Activated T-helper 1 cell treated with anti-CD3 and anti-CD28 coated beads, Interleukin-12 subunit alpha, Interleukin-12 subunit beta, Interleukin-2, Interleukin-4 antibody, amounts not matched to agents 30 ng/mL and 10 ng/mL and 1 ng/mL, durations not matched to agents 14 hours and 24 hours and 36 hours (primary cell): ENCODE measurements at regions of chr13 and their contacts with region 1.

Region 1: DNA sequence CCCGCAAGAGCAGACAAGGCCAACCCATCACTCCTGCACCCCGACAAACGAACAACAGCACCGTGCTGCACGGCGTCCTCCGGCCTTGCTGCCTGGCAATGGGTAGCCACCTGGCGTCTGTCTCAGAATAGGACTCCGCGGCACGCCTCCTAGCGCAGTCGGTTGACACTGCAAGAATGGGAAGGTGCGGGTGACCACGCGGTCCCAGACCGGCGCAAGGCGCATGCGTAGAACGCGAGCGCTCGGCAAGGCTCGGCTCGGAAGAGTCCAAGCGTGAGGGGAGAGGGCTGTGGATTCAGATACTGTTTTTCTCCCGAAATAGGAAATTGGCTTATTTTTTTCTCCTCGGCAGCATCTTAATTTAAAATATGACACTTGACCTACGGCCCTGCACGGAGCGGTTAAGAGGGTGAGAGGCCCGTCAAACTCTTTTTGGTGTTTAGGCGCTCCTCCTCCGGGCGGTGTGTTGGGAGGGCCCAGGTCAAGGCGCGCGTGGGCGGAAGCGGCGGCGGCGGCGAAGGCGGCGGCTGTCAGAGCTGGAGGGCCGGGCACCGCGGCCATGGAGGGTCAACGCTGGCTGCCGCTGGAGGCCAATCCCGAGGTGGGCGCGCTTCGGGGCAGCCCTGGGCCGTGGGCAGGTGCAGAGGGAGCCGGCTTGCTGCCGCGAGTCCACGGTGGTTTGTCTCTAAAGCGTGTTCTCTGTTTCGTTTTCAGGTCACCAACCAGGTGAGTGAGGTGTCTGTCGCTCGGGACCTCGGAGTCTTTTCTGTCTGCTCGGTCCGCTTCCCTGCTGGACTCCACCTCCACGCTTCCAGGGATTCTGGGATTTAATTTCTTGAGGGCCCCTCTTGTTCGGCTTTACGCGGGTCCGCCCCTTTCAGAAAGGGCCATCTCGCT is at the start of gene UCHL3:
- DNase-seq: peak; percentile 95
- H3K4me3 Mint-ChIP-seq: peak within 1 kb of the TSS; percentile 99
- H3K27ac Mint-ChIP-seq: peak within 1 kb of the TSS; percentile 98
- H3K4me1 Mint-ChIP-seq: peaks cover 39% of the 10 kb centered on the region
- H3K27me3 Mint-ChIP-seq: no peaks in the 10 kb centered on the region
- total RNA-seq, gene UCHL3: 38.9 and 46.6 TPM in 2 replicates

Region 2: GRCh38 chr13:75181906-75182305 is 367.6 kb before region 1 on chr13:
- intact Hi-C with region 1: no loop called
- DNase-seq: no peak
- H3K4me3 Mint-ChIP-seq: no peak overlapping the region
- H3K27ac Mint-ChIP-seq: no peak overlapping the region
- H3K4me1 Mint-ChIP-seq: no peaks in the 10 kb centered on the region
- H3K27me3 Mint-ChIP-seq: no peaks in the 10 kb centered on the region

Region 3: DNA sequence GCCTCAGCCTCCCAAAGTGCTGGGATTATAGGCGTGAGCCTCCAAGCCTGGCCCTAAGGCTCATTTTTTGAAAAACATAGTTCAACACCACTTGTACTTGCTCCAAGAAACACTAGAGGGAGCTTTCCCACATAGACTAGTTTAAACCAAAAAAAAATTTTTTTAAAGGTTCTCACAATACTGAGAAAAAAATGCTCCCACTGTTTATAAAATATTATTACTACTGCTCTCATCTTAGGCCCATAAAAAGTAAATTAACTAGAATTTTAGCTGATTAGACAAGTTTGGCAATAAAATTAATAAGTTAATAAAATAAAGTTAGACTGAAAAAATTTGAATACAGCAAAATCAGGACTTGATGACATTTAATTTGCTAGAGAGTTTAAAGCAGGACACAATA is 177.0 kb before region 1 on chr13:
- intact Hi-C with region 1: loop called (anchors 1 kb)
- DNase-seq: no peak
- H3K4me3 Mint-ChIP-seq: no peak overlapping the region
- H3K27ac Mint-ChIP-seq: no peak overlapping the region
- H3K4me1 Mint-ChIP-seq: peaks cover 12% of the 10 kb centered on the region
- H3K27me3 Mint-ChIP-seq: no peaks in the 10 kb centered on the region

Region 4: DNA sequence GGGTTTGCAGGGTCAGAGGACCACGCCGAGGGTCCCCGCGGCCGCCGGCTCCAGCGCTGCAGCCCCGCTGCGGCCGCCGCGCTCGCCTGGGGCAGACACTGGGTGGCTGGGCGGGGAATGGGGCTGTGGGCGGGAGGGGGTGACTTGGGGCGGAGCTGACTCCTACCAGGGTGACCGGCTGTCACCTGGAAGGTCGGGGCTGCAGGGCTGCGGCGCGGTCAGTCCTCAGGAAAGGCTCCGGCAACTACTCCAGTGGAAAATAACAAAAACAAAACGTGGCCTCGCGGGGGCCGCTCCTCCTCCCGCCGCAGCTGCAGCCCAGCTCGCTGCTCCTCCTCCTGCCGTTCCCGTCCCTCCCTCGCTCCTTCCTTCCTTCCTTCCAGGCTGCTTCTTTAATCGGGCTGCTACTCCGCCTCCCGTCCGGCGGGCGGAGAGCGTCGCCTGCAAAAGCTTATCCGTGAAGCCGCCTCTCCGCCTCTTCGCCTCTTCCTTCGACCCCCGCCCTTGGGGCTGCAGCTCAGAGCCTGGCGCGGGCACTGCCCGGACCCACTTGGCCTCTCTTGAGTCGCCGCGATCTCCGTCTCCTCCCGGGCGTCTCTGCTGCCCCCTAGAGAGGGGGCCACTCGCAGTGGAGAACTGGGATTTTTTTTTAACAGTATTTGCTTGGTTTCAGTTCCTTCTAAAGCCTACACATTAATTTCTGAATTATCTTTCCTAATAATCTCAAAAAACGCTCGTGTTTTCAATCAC is 67.3 kb before region 1 on chr13 and contains the start of gene TBC1D4:
- intact Hi-C with region 1: loop called (anchors 1 kb)
- DNase-seq: peak; percentile 40
- H3K4me3 Mint-ChIP-seq: peak within 1 kb of the TSS; percentile 99
- H3K27ac Mint-ChIP-seq: peak within 1 kb of the TSS; percentile 89
- H3K4me1 Mint-ChIP-seq: peaks cover 45% of the 10 kb centered on the region
- H3K27me3 Mint-ChIP-seq: peaks cover 49% of the 10 kb centered on the region
- total RNA-seq, gene TBC1D4: 66.6 and 73.5 TPM in 2 replicates

Region 5: GRCh38 chr13:75635828-75636435 is 86.4 kb after region 1 on chr13 and contains the start of gene LMO7:
- intact Hi-C with region 1: loop called (anchors 1 kb)
- DNase-seq: peak; percentile 37
- H3K4me3 Mint-ChIP-seq: peak within 1 kb of the TSS; percentile 76
- H3K27ac Mint-ChIP-seq: no peak within 1 kb of the TSS
- H3K4me1 Mint-ChIP-seq: peaks cover 16% of the 10 kb centered on the region
- H3K27me3 Mint-ChIP-seq: peaks cover 26% of the 10 kb centered on the region
- total RNA-seq, gene LMO7: 2.9 and 3.2 TPM in 2 replicates

Region 6: GRCh38 chr13:75647126-75647784 is 97.7 kb after region 1 on chr13:
- intact Hi-C with region 1: no loop called
- DNase-seq: no peak
- H3K4me3 Mint-ChIP-seq: no peak overlapping the region
- H3K27ac Mint-ChIP-seq: no peak overlapping the region
- H3K4me1 Mint-ChIP-seq: no peaks in the 10 kb centered on the region
- H3K27me3 Mint-ChIP-seq: no peaks in the 10 kb centered on the region